HEK293 (cell line): ENCODE measurements at regions of chr14 and their contacts with region 1.

Region 1: GRCh38 chr14:101770183-101770582 is 8.7 kb downstream of the PPP2R5C start:
- H3K4me3 ChIP-seq: no peak overlapping the region
- H3K27ac ChIP-seq: no peak overlapping the region
- H3K4me1 ChIP-seq: peaks cover 13% of the 10 kb centered on the region
- CTCF ChIP-seq: no peak

Region 2: DNA sequence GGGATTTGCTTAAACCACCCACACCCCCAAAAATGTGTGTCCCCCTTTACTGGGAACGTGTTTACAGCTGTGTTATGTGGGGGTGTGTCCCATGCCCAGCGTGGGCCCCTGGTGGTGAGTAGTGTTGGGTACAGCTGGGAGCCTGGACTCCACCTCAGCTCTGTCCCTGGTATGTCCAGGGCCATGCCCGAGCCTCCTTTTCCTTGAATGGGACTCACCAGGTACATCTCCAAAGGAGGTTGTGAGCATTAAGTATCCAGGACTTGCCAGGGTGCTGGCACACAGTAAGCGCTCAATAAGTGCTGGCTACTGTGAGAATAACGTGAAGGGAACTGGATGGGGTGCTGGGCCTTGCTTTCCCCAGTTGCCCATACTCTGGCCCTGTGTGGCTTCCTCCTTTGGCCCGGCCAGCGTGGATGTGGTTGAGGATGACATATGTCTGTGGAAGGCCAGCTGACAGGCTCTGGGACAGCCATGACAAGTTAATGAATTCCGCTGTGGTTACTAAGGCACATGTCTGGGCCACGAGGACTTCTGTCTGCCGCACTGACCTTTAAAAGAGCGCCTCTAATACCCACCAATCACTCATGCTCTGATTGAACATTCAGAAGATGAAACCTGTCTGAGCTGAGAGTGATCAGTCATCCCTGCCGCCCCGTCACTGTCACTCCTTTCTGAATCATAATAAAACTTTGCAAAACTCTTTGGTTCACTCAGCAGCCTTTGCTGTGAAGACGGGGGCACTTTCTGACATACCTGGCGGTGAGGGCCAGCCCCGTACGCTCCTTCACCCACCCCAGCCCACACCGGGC is 134.2 kb before region 1 on chr14:
- CTCF ChIA-PET with region 1: no interaction called
- POLR2A ChIA-PET with region 1: no interaction called
- H3K4me3 ChIP-seq: no peak overlapping the region
- H3K27ac ChIP-seq: no peak overlapping the region
- H3K4me1 ChIP-seq: no peaks in the 10 kb centered on the region
- CTCF ChIP-seq: no peak

Region 3: DNA sequence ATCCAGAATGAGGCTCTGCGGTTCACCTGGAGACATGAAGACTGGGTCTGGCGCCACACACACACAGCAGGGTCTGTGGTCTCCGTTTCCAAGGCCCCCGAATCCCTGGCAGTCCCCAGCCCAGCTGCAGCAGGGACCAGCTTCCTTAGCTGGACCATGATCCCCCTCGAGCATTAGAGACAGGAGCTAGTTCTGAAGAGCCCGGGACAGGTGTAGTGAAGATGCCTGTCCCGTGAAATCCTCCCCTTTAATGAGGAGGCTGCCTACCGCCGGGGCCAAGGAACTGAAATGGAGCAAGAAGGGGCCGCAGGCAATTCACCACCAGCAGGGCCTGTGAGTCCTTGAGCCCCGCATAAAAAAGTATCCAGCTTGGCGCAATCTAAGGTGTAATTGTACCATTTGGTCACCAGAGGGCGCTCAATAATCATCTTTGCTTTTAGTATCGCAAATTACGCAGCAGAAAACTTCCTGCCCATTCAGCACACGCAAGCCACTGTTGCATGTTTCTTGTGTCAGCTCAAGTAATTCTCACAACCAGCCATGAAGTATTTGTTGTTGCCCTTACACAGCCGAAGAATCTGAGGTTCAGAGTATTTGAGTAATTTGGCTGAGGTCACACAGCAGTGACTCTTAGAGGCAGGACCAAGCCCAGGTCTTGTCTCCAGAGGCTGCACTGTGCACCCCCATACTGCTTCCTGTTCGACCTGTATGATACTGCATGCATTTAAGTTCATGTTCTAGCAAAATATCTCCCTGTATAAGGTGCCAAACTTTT is 62.9 kb before region 1 on chr14:
- CTCF ChIA-PET with region 1: interaction called, 15 read pairs
- POLR2A ChIA-PET with region 1: no interaction called
- H3K4me3 ChIP-seq: no peak overlapping the region
- H3K27ac ChIP-seq: no peak overlapping the region
- H3K4me1 ChIP-seq: no peaks in the 10 kb centered on the region
- CTCF ChIP-seq: peak; percentile 62

Region 4: DNA sequence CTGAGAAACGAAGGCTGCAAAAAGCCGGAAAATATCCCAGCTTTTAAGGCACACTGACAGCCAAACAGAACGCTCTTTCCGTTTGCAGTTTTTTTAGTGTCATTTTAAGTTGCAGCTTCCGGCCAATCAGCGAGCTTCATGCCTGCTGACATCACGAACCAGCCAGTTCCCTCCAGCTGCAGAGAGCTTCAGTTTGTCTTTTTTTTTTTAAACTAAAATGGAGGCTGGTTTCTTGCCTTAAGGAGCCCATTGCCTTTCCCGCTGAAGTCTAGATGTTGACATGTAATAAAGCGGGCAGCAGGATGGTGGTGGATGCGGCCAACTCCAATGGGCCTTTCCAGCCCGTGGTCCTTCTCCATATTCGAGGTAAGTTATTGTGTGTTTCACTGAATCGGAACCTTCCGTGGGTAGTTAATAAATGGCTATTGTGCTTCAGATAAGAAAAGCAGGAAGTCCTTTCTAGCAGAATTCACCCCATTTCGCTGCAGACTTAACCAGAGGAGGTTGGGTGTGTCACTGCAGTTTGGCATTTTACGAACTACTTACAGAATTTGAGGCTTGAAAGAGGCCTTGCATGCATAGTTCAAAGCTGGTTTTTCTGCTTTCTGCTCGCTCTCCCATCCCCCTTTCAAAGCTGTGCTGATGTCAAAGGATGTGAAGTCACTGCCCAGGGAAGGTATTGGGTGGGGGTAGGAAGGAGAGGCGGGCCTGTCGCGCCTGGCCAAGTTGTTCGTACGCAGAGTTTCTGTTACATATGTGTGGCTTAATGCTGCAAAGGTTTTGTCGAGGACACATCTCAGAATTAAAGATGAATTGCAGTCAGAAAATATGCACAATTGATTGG is 39.7 kb after region 1 on chr14:
- CTCF ChIA-PET with region 1: interaction called, 21 read pairs
- POLR2A ChIA-PET with region 1: interaction called, 5 read pairs
- H3K4me3 ChIP-seq: peak overlapping the region; percentile 81
- H3K27ac ChIP-seq: peak overlapping the region; percentile 85
- H3K4me1 ChIP-seq: peaks cover 10% of the 10 kb centered on the region
- CTCF ChIP-seq: no peak

Region 5: DNA sequence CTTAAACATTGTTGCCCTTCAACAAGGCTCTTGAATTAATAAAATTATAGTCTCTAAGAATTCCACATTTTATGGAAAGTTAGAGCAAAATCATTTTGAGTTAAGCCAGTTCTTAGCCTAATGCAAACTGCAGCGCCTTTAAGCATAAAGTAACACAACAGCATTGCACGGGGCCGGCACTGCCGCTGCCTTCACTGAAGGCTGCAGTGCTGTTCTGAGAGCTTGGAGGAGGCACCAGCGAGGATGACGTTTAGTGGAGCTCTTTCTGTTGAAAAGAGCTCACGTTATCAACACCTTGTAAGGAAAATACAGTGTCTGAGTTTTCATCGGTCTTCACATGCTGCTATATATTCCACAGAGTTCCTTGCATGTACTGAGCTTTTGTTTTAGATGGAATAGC is 155.9 kb after region 1 on chr14:
- CTCF ChIA-PET with region 1: interaction called, 10 read pairs
- POLR2A ChIA-PET with region 1: no interaction called
- H3K4me3 ChIP-seq: no peak overlapping the region
- H3K27ac ChIP-seq: no peak overlapping the region
- H3K4me1 ChIP-seq: no peaks in the 10 kb centered on the region
- CTCF ChIP-seq: no peak